H1 (cell line): ENCODE measurements at regions of chr15 and their contacts with region 1.

Region 1: DNA sequence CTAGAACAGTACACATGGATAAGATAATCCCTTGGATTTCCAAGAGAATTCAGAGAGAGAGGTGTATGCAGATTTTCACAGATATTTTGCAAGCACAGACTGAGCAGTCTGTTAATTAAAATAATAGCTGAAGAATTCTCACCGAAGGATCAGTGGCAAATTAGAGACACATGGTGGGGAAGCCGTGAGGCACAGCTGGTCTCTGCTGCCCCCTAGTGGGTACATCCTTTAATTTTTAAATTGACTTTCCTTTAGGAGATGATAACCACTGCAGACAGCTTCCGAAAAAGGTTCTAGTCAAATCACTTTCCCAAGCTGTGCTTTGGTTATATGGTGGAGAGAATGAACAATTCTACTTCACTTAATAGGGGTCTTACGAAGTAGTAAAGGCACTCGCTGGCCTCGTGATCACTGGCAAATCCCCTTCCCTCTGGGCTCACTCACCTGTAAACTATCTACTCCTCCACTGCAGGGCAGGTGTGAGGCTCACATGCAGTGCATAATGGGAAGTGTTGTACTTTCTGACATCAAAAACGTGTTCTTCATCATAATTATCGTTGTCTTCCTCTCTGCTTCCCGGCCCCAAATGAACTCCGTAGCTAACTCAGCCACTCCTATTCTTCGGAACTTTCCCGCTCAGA is 19.5 kb downstream of the MESD start:
- DNase-seq: peak in 1 of 2 experiments; percentile 78
- H3K4me3 ChIP-seq: no peak overlapping the region
- H3K27ac ChIP-seq: no peak overlapping the region
- H3K4me1 ChIP-seq: peaks cover 13 to 30% (median 21%) of the 10 kb centered on the region in 4 experiments
- H3K27me3 ChIP-seq: no peaks in the 10 kb centered on the region
- CTCF ChIP-seq: peak; percentile 66 to 74 (median 71)
- EP300 ChIP-seq: no peak
- POLR2A ChIP-seq: no peak
- RAD21 ChIP-seq: peak; percentile 91 to 92

Region 2: GRCh38 chr15:80567721-80568157 is 402.4 kb before region 1 on chr15:
- CTCF ChIA-PET with region 1: interaction called, 11 read pairs
- POLR2A ChIA-PET with region 1: no interaction called
- DNase-seq: peak in 1 of 2 experiments; percentile 59
- H3K4me3 ChIP-seq: no peak overlapping the region
- H3K27ac ChIP-seq: no peak overlapping the region
- H3K4me1 ChIP-seq: peaks cover 0 to 13% (median 3%) of the 10 kb centered on the region in 4 experiments; a peak in 4 of 7 replicates
- H3K27me3 ChIP-seq: no peaks in the 10 kb centered on the region
- CTCF ChIP-seq: peak; percentile 30 to 98 (median 91)
- EP300 ChIP-seq: no peak
- POLR2A ChIP-seq: no peak
- RAD21 ChIP-seq: peak; percentile 90 to 93

Region 3: DNA sequence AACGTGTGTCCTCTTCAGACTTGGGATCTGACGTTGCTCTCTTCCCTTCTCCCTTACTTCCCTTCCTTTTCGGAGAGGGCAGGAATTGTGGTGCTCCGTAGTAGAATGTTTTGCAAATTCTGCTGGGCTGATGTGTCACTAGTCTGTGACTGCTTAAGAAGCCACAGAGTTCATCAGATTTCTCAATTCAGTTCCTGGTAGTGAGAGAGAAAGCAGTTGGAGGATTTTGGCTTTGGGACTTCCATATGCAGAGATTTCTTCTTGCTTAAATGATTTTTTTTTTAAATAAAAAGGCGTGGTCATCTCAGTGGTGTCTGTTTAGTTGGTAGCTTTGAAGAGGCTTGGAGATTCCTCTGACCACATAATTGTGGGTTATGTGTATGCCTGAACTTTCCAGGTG is 180.8 kb before region 1 on chr15:
- CTCF ChIA-PET with region 1: interaction called, 15 read pairs
- POLR2A ChIA-PET with region 1: no interaction called
- DNase-seq: no peak
- H3K4me3 ChIP-seq: no peak overlapping the region
- H3K27ac ChIP-seq: no peak overlapping the region
- H3K4me1 ChIP-seq: no peaks in the 10 kb centered on the region
- H3K27me3 ChIP-seq: no peaks in the 10 kb centered on the region; a peak in 1 of 7 replicates
- CTCF ChIP-seq: no peak
- EP300 ChIP-seq: no peak
- POLR2A ChIP-seq: no peak
- RAD21 ChIP-seq: no peak

Region 4: DNA sequence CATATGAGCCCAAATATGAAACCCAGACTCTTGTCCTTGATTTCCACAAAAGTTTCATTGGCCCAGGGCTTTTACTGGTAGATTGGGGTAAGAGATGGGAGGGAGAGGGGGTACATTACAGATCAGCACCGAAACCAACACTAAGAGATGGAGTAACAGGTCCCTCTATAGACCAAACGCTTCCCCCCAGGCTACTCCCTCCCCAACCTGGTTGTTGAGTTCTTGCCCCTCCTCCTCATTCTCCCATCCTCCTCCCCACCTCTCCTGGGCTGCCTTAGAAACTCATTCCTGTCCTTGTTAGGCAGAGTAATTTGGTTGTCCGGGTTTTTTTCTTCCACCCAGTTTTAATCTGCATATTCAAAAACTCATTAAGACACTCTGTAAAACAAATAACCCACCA is 54.7 kb before region 1 on chr15:
- CTCF ChIA-PET with region 1: interaction called, 28 read pairs
- POLR2A ChIA-PET with region 1: no interaction called
- DNase-seq: peak; percentile 56 to 58
- H3K4me3 ChIP-seq: no peak overlapping the region
- H3K27ac ChIP-seq: no peak overlapping the region
- H3K4me1 ChIP-seq: peaks cover 0 to 3% (median 3%) of the 10 kb centered on the region in 4 experiments; a peak in 4 of 7 replicates
- H3K27me3 ChIP-seq: peaks cover 0 to 2% (median 0%) of the 10 kb centered on the region in 4 experiments; a peak in 2 of 7 replicates
- CTCF ChIP-seq: peak; percentile 55 to 76 (median 57); a peak in 3 of 4 replicates
- EP300 ChIP-seq: no peak
- POLR2A ChIP-seq: no peak
- RAD21 ChIP-seq: peak; percentile 78 to 80

Region 5: DNA sequence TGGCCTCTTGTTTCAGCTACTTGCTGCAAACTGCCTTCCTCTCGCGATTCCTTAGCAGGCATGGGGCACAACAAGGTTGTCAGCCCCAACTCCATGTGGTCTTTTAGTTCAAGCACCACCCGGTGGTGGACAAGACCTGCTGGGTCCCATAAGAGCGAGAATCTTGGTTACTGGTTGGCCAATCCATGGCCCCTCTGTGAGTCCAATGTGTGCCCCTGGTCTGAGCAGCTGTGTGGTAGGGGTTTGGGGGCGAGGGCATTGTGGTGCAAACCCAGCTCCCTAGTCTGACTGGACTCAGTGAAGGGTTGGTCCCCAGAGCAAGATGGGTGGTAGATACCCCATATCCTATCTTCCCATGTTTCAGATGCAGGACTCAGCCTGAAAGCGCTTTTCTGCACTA is 29.3 kb before region 1 on chr15:
- CTCF ChIA-PET with region 1: interaction called, 12 read pairs
- POLR2A ChIA-PET with region 1: no interaction called
- DNase-seq: no peak
- H3K4me3 ChIP-seq: no peak overlapping the region
- H3K27ac ChIP-seq: no peak overlapping the region
- H3K4me1 ChIP-seq: no peaks in the 10 kb centered on the region; a peak in 1 of 7 replicates
- H3K27me3 ChIP-seq: no peaks in the 10 kb centered on the region
- CTCF ChIP-seq: no peak
- EP300 ChIP-seq: no peak
- POLR2A ChIP-seq: no peak
- RAD21 ChIP-seq: no peak

Region 6: GRCh38 chr15:81071120-81071519 is 101.0 kb after region 1 on chr15:
- CTCF ChIA-PET with region 1: no interaction called
- POLR2A ChIA-PET with region 1: no interaction called
- DNase-seq: peak in 1 of 2 experiments; percentile 10
- H3K4me3 ChIP-seq: no peak overlapping the region
- H3K27ac ChIP-seq: no peak overlapping the region
- H3K4me1 ChIP-seq: no peaks in the 10 kb centered on the region
- H3K27me3 ChIP-seq: no peaks in the 10 kb centered on the region
- CTCF ChIP-seq: no peak
- EP300 ChIP-seq: no peak
- POLR2A ChIP-seq: no peak
- RAD21 ChIP-seq: no peak